ENCODE measurements at regions of chr2 and their contacts with region 1.

Region 1: GRCh38 chr2:127857265-127857808 is 618 bp downstream of the POLR2D start:
- DNase-seq: no peak
- ATAC-seq: no peak
- H3K4me3 ChIP-seq: peak overlapping the region; percentile 98
- H3K4me3 Mint-ChIP-seq: peak overlapping the region; percentile 84 to 99 (median 94)
- H3K27ac ChIP-seq: peak overlapping the region; percentile 86
- H3K27ac Mint-ChIP-seq: peak overlapping the region; percentile 29 to 97 (median 90)
- H3K4me1 ChIP-seq: peaks cover 22 to 25% of the 10 kb centered on the region in 2 donors
- H3K4me1 Mint-ChIP-seq: peaks cover 22 to 68% (median 44%) of the 10 kb centered on the region in 7 donors
- H3K27me3 ChIP-seq: no peaks in the 10 kb centered on the region
- H3K27me3 Mint-ChIP-seq: no peaks in the 10 kb centered on the region

Region 2: DNA sequence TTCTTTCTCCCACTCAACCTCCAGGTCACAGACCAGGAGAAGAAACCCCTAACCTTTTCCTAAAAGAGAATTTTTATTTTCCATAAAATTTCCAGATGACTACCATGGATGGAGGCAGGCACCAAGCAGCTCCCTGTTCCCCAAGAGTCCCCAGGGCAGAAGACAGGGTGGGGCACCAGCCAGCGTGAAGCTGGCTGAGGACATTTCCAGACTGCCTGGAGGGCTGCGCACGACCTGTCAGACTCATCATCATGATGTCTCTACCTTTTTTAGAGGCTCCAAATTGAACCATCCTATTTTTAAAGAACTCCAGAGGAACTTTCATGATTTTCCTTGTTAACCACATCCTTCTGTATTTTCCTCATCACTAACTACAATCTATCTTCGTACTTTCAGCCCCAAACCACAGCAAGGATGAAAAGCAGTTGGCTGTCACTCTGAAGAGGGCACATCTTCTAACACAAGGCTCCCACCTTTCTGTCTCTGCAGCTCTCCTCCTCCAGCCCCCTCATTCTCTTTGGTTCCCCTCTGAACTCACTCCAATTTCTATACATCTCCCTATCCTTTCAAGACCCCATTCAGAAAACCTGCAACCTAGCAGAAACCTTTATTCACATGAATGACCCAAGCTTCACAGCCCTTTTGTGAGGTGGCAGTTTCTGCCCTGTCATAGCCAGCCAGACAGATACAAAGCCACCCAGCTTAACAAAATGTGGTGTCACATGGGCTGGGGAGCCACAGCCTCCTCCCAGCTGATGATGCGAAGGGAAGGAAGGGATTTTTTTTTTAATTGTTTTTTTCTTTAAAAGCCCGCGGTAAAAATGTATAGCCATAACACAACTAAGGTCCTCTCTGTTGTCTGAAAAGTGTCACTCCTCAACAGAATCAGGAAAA is 17.3 kb after region 1 on chr2:
- CTCF ChIA-PET with region 1: interaction called, 3 read pairs
- POLR2A ChIA-PET with region 1: no interaction called
- intact Hi-C with region 1: loop called in 1 of 2 experiments (anchors 2 kb)
- DNase-seq: peak in 2 of 9 donors; percentile 3 to 35
- ATAC-seq: peak; percentile 59
- H3K4me3 ChIP-seq: no peak overlapping the region
- H3K4me3 Mint-ChIP-seq: peak overlapping the region in 6 of 10 donors; percentile 1 to 36 (median 5)
- H3K27ac ChIP-seq: peak overlapping the region; percentile 28
- H3K27ac Mint-ChIP-seq: peak overlapping the region; percentile 38 to 88 (median 74)
- H3K4me1 ChIP-seq: peaks cover 0 to 10% of the 10 kb centered on the region in 2 donors
- H3K4me1 Mint-ChIP-seq: peaks cover 38 to 61% (median 52%) of the 10 kb centered on the region in 7 donors
- H3K27me3 ChIP-seq: no peaks in the 10 kb centered on the region
- H3K27me3 Mint-ChIP-seq: no peaks in the 10 kb centered on the region

Region 3: DNA sequence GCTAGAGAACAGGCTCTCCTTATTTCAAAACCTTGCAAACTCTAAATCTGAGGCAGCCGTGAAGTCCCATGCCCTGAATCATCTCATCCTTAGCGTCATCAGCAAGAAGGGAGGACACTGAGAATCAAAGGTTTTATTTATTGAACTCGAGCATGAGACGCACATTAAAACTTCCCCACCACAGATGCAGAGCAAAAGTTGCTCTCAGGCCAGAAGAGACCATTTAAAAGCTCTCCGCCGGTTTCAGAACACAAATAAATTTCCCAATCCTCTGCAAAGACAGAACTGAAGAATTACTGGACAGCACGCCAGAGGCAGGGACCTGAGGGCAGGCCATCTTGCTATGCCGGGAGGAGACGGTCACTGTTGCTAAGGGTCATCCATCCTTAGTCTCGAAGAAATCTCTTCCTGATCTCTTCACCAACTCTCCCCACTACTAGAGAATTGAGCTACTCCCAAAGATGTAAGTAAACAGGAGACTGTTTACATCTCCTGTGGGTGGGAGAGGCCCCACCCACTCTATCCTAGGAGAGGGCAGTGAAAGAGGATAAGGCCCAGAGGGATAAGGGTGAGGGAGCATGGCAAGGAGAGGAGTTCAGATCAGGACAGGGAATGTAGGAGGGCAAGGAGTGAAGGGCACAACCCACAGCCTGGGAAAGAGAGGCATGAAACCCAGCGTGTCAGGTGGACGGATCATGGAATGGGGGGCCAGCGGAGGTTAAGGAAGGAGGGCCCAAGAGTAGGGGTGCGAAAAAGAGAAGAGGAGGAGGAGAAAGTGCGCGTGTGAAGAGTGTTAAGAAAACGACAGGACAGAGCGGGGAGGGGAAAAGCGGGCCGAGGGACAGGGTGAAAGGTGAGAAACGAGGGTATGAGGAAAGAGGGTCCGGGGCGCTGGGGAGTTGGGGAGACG is 27.4 kb after region 1 on chr2:
- CTCF ChIA-PET with region 1: no interaction called
- POLR2A ChIA-PET with region 1: interaction called, 3 read pairs
- intact Hi-C with region 1: loop called (anchors 1 to 2 kb)
- DNase-seq: peak in 1 of 9 donors; percentile 7
- ATAC-seq: no peak
- H3K4me3 ChIP-seq: peak overlapping the region; percentile 43
- H3K4me3 Mint-ChIP-seq: peak overlapping the region; percentile 78 to 100 (median 92)
- H3K27ac ChIP-seq: peak overlapping the region; percentile 55
- H3K27ac Mint-ChIP-seq: peak overlapping the region; percentile 75 to 94 (median 89)
- H3K4me1 ChIP-seq: peaks cover 15 to 24% of the 10 kb centered on the region in 2 donors
- H3K4me1 Mint-ChIP-seq: peaks cover 36 to 73% (median 66%) of the 10 kb centered on the region in 7 donors
- H3K27me3 ChIP-seq: no peaks in the 10 kb centered on the region
- H3K27me3 Mint-ChIP-seq: no peaks in the 10 kb centered on the region

Region 4: DNA sequence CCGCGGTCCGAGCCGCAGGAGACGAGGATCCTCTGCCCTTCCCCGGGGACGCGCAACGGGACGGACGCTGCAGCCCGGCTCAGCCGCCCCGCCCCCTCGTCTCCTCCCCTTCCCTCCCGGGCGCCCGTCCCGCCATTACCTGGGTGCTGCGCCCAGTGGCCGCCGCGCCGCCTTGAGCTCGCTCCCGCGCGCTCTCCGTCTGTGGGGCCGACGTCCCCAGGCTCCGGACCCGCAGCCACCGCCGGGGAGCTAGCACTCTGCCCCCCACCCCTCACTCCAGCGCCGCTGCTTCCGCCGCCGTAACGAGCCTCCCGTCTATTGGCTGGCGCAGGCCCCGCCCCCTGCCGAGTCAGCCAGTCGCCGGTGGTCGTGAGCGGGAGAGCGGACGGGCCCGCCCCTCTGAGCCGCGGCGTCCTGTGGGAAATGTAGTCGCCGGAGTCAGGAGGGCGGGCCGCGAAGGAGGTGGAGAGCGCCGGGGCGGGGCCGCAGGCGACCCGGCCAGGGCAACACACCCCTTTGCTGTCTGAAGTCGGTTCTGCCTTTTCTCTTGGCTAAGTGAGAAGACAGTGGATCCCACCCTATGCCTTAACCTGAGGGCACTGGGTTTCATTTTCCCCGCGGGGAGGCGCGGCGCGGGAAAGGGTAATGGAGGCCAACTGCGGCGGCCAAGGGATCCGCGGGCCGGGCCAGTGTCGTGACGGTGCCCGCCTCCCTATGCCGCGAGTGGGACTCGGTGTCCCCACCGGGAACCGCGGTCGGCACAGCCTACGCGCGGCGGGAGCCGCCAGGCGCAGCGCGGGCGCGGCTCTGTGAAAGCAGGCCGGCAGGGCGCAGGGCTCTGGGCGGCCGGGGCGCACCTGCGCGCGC is 170.7 kb after region 1 on chr2 and contains the start of gene SAP130:
- CTCF ChIA-PET with region 1: no interaction called
- POLR2A ChIA-PET with region 1: interaction called, 4 read pairs
- intact Hi-C with region 1: loop called (anchors 1 kb)
- DNase-seq: peak; percentile 96 to 99 (median 98)
- ATAC-seq: peak; percentile 86
- H3K4me3 ChIP-seq: peak within 1 kb of the TSS; percentile 86
- H3K4me3 Mint-ChIP-seq: peak within 1 kb of the TSS; percentile 87 to 98 (median 98)
- H3K27ac ChIP-seq: peak within 1 kb of the TSS; percentile 91
- H3K27ac Mint-ChIP-seq: peak within 1 kb of the TSS; percentile 52 to 97 (median 93)
- H3K4me1 ChIP-seq: peaks cover 0 to 14% of the 10 kb centered on the region in 2 donors
- H3K4me1 Mint-ChIP-seq: peaks cover 14 to 32% (median 28%) of the 10 kb centered on the region in 7 donors
- H3K27me3 ChIP-seq: no peaks in the 10 kb centered on the region
- H3K27me3 Mint-ChIP-seq: peaks cover 0 to 16% (median 0%) of the 10 kb centered on the region in 5 donors
- total RNA-seq, gene SAP130: 29.9 to 38.0 (median 30.9) TPM

Region 5: DNA sequence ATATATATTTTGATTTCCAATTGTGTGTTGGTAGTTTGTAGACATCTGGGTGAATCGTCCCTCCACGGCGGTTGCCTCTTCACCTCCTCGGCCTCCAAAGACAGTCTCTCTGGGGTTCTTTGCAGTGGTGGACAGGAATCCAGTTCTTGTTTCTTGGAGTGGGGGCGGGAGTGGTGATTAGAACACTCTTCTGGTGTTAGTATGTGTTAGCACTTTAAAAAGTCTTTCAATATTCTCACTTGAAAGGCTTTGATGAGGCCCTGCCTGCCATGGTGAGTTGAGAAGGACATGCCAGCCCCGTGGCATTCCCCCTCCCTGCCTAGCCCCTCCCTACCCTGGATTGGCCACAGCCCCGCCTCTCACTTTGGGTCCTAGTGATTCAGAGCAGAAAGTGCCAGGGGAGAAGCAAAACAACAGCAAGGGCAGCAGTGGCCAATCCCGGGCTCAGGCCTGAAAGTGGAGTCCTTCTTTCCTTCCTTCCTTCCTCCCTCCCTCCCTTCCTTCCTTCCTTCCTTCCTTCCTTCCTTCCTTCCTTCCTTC is 778.1 kb after region 1 on chr2:
- CTCF ChIA-PET with region 1: no interaction called
- POLR2A ChIA-PET with region 1: no interaction called
- intact Hi-C with region 1: no loop called
- DNase-seq: no peak
- ATAC-seq: no peak
- H3K4me3 ChIP-seq: no peak overlapping the region
- H3K4me3 Mint-ChIP-seq: no peak overlapping the region
- H3K27ac ChIP-seq: no peak overlapping the region
- H3K27ac Mint-ChIP-seq: no peak overlapping the region
- H3K4me1 ChIP-seq: no peaks in the 10 kb centered on the region
- H3K4me1 Mint-ChIP-seq: no peaks in the 10 kb centered on the region
- H3K27me3 ChIP-seq: no peaks in the 10 kb centered on the region
- H3K27me3 Mint-ChIP-seq: peaks cover 0 to 26% (median 0%) of the 10 kb centered on the region in 5 donors

Measured in naive thymus-derived CD4-positive, alpha-beta T cell (primary cell).